ENCODE measurements at regions of chr21 and their contacts with region 1.

Region 1: GRCh38 chr21:18987520-18988026 is 584.0 kb upstream of the TMPRSS15 start:
- DNase-seq: no peak
- ATAC-seq: no peak

Region 2: DNA sequence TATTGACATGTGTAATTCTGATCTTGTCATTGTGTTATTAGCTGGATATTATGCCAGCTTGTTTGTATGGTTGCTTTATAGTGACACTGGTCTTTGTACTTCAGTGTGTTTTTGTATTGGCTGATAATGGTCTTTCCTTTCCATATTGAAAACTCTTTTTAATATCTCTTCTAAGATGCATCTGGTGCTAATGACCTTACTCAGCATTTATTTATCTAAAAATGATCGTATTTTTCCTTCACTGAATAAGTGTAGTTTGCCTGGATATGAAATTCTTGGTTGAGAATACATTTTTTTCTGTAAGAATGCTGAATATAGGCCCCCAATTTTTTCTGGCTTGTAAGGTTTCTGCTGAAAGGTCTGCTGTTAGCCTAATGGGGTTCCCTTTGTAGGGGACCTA is 118.5 kb before region 1 on chr21:
- intact Hi-C with region 1: no loop called
- DNase-seq: no peak
- ATAC-seq: no peak

Region 3: DNA sequence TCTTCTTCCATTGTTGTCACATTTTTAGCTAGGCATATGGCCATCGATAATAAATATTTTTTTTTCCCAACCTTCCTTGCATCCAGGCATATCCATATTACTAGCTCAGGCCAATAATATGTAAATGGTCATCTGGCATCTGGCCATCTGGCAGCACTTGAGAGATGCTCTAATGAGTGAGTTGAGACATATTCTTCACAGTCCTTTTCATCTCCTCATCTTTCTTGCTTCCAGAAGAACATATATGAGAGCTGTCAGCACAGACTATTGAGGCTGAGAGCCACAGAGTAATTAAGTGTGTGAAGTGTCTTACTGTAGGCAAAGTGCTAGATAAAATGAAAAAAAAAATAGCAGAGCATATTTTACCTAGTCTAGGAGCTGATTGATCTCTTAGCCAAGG is 44.4 kb after region 1 on chr21:
- intact Hi-C with region 1: loop called (anchors 5 kb)
- DNase-seq: no peak
- ATAC-seq: no peak

Measured in left ventricle myocardium superior (tissue), 1 donor.